ENCODE measurements at regions of chrX and their contacts with region 1.

Region 1: DNA sequence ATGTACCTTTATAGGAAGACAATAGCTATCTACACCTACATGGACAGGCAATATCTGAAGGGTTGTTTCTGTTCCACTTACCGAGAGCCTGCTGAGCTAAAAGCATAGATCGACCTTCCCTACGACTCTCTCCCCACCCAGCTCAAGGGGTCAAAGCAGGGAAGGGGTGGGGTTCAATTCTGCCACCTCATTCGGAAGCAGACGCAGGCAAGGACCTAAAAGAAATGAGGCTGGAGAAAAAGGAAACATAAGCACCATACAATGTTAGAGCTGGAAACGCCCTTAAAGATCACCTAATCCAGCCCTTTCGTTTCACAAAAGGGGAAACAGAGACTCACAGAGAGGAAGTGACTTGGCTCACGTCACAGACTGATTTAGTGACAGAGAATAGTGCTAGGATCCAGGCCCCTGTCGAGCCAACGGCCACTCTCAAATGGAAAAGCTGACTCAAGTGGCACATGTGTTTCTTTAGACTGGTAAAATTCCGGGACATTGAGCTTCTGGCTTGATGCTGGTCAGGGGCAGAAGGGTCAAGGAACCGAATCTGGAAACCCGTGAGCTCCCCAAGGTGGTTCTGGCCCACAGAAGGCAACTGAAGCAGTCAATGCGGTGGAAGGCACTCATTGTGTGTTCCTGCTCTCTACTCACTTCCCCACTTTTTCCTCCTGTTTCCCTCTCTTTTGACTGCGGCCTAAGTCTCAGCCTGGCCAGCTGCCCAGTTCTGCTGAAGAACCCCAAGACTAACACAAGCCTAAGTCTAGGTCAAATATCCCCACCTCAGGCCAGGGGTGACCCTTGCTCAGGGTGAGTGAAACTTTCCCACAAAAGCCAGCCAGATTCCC is 7.5 kb downstream of the SEPTIN6 start:
- DNase-seq: peak; percentile 73
- ATAC-seq: peak; percentile 51
- H3K4me3 Mint-ChIP-seq: peak overlapping the region; percentile 98
- H3K27ac Mint-ChIP-seq: peak overlapping the region; percentile 98
- H3K4me1 Mint-ChIP-seq: peaks cover 54% of the 10 kb centered on the region
- H3K27me3 Mint-ChIP-seq: no peaks in the 10 kb centered on the region

Region 2: DNA sequence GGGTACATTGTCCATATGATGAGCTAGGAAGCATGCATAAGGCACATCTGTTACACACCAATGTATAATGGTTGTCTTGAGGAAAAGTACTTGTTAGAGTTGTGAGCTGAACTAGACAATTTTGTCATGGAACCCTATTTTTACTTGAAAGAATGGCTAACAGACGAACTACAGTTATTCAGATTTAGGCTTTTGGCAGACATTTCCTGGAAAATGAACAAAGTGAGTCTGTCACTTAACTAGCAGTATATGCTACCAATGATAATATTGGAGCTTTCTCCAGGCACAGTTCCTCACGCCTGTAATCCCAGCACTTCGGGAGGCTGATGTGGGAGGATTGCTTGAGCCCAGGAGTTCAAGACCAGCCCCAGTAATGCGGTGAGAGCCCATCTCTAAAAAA is 348.2 kb before region 1 on chrX:
- CTCF ChIA-PET with region 1: no interaction called
- POLR2A ChIA-PET with region 1: no interaction called
- intact Hi-C with region 1: no loop called
- DNase-seq: no peak
- ATAC-seq: no peak
- H3K4me3 Mint-ChIP-seq: no peak overlapping the region
- H3K27ac Mint-ChIP-seq: no peak overlapping the region
- H3K4me1 Mint-ChIP-seq: no peaks in the 10 kb centered on the region
- H3K27me3 Mint-ChIP-seq: peaks cover 2% of the 10 kb centered on the region

Region 3: GRCh38 chrX:119624951-119625668 is 60.3 kb before region 1 on chrX:
- CTCF ChIA-PET with region 1: no interaction called
- POLR2A ChIA-PET with region 1: no interaction called
- intact Hi-C with region 1: no loop called
- DNase-seq: no peak
- ATAC-seq: no peak
- H3K4me3 Mint-ChIP-seq: no peak overlapping the region
- H3K27ac Mint-ChIP-seq: peak overlapping the region; percentile 14
- H3K4me1 Mint-ChIP-seq: no peaks in the 10 kb centered on the region
- H3K27me3 Mint-ChIP-seq: no peaks in the 10 kb centered on the region

Region 4: DNA sequence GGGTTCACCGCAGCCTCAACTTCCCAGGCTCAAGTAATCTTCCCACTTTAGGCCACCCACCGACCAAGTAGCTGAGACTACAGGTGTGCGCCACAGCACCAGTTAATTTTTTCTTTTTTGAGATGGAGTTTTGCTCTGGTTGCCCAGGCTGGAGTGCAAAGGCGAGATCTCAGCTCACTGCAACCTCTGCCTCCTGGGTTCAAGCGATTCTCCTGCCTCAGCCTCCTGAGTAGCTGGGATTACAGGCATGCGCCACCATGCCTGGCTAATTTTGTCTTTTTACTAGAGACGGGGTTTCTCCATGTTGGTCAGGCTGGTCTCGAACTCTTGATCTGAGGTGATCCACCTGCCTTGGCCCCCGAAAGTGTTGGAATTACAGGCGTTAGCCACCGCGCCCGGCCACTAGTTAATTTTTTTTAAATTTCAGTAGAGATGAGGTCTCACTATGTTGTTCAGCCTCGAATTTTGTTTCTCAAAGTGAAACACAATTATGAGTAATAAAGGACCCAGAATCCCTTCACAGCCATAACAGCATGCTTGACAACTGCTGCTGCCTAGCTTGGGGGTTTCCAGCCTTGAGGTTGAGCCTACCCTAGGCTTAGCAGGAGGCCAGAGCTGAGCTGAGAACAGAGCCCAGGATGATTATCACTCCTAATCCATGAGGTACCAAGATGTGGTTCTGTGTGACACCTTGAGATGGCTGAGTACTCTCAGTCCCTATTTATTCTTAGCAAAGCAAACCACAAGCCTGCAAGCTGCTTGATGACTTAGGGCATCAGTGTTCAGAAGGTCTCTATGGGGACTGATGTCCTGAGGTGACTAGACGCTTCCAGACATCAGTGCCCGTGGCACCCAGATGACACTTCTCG is 37.7 kb before region 1 on chrX:
- CTCF ChIA-PET with region 1: interaction called, 3 read pairs
- POLR2A ChIA-PET with region 1: interaction called, 13 read pairs
- intact Hi-C with region 1: loop called in 1 of 2 experiments (anchors 2 kb)
- DNase-seq: peak; percentile 81
- ATAC-seq: peak; percentile 96
- H3K4me3 Mint-ChIP-seq: peak overlapping the region; percentile 32
- H3K27ac Mint-ChIP-seq: peak overlapping the region; percentile 91
- H3K4me1 Mint-ChIP-seq: peaks cover 36% of the 10 kb centered on the region
- H3K27me3 Mint-ChIP-seq: no peaks in the 10 kb centered on the region